CD4-positive, alpha-beta T cell (primary cell): ENCODE measurements at regions of chr9 and their contacts with region 1.

Region 1: GRCh38 chr9:79571309-79572031 is at the start of gene TLE4:
- DNase-seq: peak; percentile 98 to 100 (median 99)
- ATAC-seq: peak; percentile 85
- H3K4me3 ChIP-seq: peak within 1 kb of the TSS; percentile 91
- H3K4me3 Mint-ChIP-seq: peak within 1 kb of the TSS; percentile 86
- H3K27ac ChIP-seq: peak within 1 kb of the TSS; percentile 72 to 85
- H3K27ac Mint-ChIP-seq: peak within 1 kb of the TSS; percentile 92
- H3K4me1 ChIP-seq: peaks cover 17% of the 10 kb centered on the region
- H3K4me1 Mint-ChIP-seq: peaks cover 33% of the 10 kb centered on the region
- H3K27me3 ChIP-seq: peaks cover 0 to 9% of the 10 kb centered on the region in 2 experiments
- H3K27me3 Mint-ChIP-seq: peaks cover 4% of the 10 kb centered on the region
- CTCF ChIP-seq: no peak
- total RNA-seq, gene TLE4: 125 to 136 TPM

Region 2: GRCh38 chr9:79408617-79409016 is 162.9 kb before region 1 on chr9:
- CTCF ChIA-PET with region 1: no interaction called
- POLR2A ChIA-PET with region 1: interaction called, 4 read pairs
- intact Hi-C with region 1: loop called in 1 of 2 experiments (anchors 10 kb)
- DNase-seq: no peak
- ATAC-seq: no peak
- H3K4me3 ChIP-seq: no peak overlapping the region
- H3K4me3 Mint-ChIP-seq: no peak overlapping the region
- H3K27ac ChIP-seq: no peak overlapping the region
- H3K27ac Mint-ChIP-seq: no peak overlapping the region
- H3K4me1 ChIP-seq: no peaks in the 10 kb centered on the region
- H3K4me1 Mint-ChIP-seq: no peaks in the 10 kb centered on the region
- H3K27me3 ChIP-seq: no peaks in the 10 kb centered on the region
- H3K27me3 Mint-ChIP-seq: no peaks in the 10 kb centered on the region
- CTCF ChIP-seq: no peak

Region 3: GRCh38 chr9:79559495-79560181 is 11.8 kb before region 1 on chr9:
- CTCF ChIA-PET with region 1: no interaction called
- POLR2A ChIA-PET with region 1: interaction called, 18 read pairs
- intact Hi-C with region 1: no loop called
- DNase-seq: no peak
- ATAC-seq: no peak
- H3K4me3 ChIP-seq: no peak overlapping the region
- H3K4me3 Mint-ChIP-seq: no peak overlapping the region
- H3K27ac ChIP-seq: no peak overlapping the region
- H3K27ac Mint-ChIP-seq: no peak overlapping the region
- H3K4me1 ChIP-seq: no peaks in the 10 kb centered on the region
- H3K4me1 Mint-ChIP-seq: peaks cover 6% of the 10 kb centered on the region
- H3K27me3 ChIP-seq: peaks cover 0 to 8% of the 10 kb centered on the region in 2 experiments
- H3K27me3 Mint-ChIP-seq: peaks cover 25% of the 10 kb centered on the region
- CTCF ChIP-seq: no peak

Region 4: DNA sequence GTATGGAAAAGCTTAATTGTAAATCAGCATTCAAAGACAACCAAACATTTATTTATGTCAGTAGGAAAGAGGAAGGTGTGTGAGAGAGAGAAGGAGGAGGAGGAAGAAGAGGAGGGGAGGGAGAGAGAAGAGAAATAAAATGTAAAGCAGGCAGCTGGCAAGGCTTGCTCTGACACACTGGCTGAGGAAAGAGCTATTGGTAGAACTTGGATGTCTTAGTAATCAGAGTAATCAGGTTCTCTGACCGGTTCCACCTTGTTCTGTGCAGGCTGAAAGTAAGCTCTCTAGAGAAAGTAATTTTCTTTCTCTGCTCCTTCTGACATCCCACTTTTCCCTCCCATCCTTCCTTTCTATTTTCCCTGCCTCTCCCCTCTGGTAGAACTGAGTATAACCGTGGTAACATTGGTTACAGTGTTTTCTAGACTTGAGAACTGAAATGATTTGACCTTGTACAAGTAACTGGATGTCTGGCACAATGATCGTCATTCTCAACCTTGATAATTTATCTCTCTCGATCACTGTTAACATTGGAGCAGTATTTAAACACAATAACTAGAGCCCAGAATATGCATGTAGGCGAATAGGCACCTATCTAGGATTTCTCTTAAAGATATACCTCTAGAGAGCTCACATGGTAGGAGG is 33.6 kb after region 1 on chr9:
- CTCF ChIA-PET with region 1: no interaction called
- POLR2A ChIA-PET with region 1: interaction called, 10 read pairs
- intact Hi-C with region 1: loop called in 1 of 2 experiments (anchors 5 kb)
- DNase-seq: no peak
- ATAC-seq: no peak
- H3K4me3 ChIP-seq: no peak overlapping the region
- H3K4me3 Mint-ChIP-seq: no peak overlapping the region
- H3K27ac ChIP-seq: no peak overlapping the region
- H3K27ac Mint-ChIP-seq: no peak overlapping the region
- H3K4me1 ChIP-seq: peaks cover 9% of the 10 kb centered on the region
- H3K4me1 Mint-ChIP-seq: peaks cover 38% of the 10 kb centered on the region
- H3K27me3 ChIP-seq: no peaks in the 10 kb centered on the region
- H3K27me3 Mint-ChIP-seq: no peaks in the 10 kb centered on the region
- CTCF ChIP-seq: no peak

Region 5: DNA sequence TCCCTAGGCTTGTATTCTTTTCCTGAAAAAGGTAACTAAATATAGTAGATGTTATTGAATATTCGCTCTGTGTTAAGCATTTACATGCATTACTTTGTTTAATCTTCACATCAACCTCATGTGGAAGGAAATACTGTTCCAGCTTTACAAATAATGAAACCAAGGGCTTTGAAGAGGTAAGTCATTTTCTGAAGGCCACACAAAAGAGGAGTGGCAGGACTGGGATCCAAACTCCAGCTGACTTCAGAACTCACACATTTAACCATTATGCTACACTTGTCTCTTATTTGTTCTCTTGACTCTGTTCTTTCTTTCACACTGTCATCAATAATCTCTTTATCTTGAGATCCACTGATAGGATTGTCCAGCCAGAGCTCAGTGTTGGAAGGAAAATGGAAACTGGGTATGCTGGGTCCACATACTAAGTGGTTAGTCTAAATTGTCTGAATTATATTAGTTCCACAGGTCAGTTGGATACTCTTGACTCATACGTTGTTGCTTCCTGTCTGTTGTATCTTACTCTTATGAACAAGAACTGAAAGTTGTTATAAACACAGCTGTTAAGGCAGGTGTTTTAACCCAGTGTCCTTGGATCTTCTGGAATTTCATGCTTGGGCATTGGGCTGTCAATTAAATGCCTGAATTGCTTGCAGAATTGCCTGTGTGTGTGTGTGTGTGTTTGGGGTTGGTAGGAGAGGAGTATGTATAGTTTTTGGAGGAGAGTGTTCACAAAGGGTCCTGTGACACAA is 65.9 kb after region 1 on chr9:
- CTCF ChIA-PET with region 1: no interaction called
- POLR2A ChIA-PET with region 1: interaction called, 16 read pairs
- intact Hi-C with region 1: no loop called
- DNase-seq: no peak
- ATAC-seq: no peak
- H3K4me3 ChIP-seq: no peak overlapping the region
- H3K4me3 Mint-ChIP-seq: no peak overlapping the region
- H3K27ac ChIP-seq: no peak overlapping the region
- H3K27ac Mint-ChIP-seq: no peak overlapping the region
- H3K4me1 ChIP-seq: peaks cover 16% of the 10 kb centered on the region
- H3K4me1 Mint-ChIP-seq: peaks cover 86% of the 10 kb centered on the region
- H3K27me3 ChIP-seq: no peaks in the 10 kb centered on the region
- H3K27me3 Mint-ChIP-seq: no peaks in the 10 kb centered on the region
- CTCF ChIP-seq: no peak

Region 6: GRCh38 chr9:79883073-79883645 is 311.7 kb after region 1 on chr9:
- CTCF ChIA-PET with region 1: no interaction called
- POLR2A ChIA-PET with region 1: interaction called, 11 read pairs
- intact Hi-C with region 1: no loop called
- DNase-seq: peak in 13 of 14 experiments; percentile 15 to 87 (median 46)
- ATAC-seq: peak; percentile 88
- H3K4me3 ChIP-seq: no peak overlapping the region
- H3K4me3 Mint-ChIP-seq: peak overlapping the region; percentile 74
- H3K27ac ChIP-seq: no peak overlapping the region
- H3K27ac Mint-ChIP-seq: no peak overlapping the region
- H3K4me1 ChIP-seq: peaks cover 24% of the 10 kb centered on the region
- H3K4me1 Mint-ChIP-seq: peaks cover 75% of the 10 kb centered on the region
- H3K27me3 ChIP-seq: no peaks in the 10 kb centered on the region
- H3K27me3 Mint-ChIP-seq: no peaks in the 10 kb centered on the region
- CTCF ChIP-seq: no peak